K562 (cell line): ENCODE measurements at regions of chr9 and their contacts with region 1.

Region 1: DNA sequence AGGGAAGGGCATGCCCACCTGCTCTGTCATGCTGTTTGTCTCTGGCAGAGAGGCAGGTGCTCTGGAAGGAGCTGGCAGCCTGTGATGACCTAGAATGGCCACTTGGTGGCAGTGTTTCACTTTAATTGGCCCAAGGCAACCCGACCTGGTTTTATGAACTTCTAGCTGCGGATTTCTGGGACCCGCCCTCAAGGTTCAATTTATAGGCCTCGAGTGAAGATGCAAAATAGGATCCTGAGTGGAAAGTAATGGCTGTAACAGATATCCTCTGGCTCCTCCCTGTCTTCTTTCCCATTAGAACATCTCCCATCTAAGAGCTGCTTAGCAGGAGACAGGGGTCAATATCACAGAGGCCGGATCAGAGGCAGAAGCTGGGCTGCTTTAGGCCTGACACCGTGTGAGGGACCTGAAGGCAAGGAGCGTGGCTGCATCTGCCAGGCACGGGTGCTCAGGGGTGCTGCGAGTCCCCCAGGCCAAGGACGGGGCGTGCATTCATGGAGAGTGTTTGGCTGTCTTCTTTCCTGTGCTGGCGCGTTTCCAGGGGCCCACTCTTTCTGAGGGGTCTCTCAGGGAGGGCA is 56.7 kb upstream of the SLC28A3 start:
- DNase-seq: peak; percentile 54 to 66 (median 65)
- ATAC-seq: peak; percentile 91
- H3K4me3 ChIP-seq: no peak overlapping the region
- H3K27ac ChIP-seq: no peak overlapping the region
- H3K4me1 ChIP-seq: no peaks in the 10 kb centered on the region
- H3K27me3 ChIP-seq: no peaks in the 10 kb centered on the region
- CTCF ChIP-seq: peak; percentile 63 to 79 (median 77)
- EP300 ChIP-seq: no peak
- POLR2A ChIP-seq: no peak
- RAD21 ChIP-seq: peak; percentile 77 to 79

Region 2: DNA sequence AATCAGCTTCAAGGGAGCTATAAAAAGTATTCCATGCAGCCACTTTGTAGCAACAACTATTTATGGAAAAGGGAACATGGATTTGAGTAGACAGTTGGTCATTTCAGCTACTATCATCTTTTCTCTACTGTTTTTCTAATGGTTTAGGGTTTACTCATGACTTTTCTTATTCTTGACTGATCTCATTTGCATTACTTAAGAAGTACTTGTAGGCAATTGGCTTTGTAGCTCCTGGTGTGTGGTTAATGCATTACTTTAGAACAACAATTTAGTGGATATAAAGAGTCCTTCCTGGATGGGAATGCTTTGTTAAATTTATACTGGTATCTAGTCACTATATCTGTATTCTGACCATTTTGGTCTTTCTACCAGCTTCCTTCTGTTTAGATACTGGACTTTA is 212.5 kb after region 1 on chr9:
- CTCF ChIA-PET with region 1: no interaction called
- POLR2A ChIA-PET with region 1: no interaction called
- in situ Hi-C with region 1: no loop called
- intact Hi-C with region 1: no loop called
- DNase-seq: no peak
- ATAC-seq: no peak
- H3K4me3 ChIP-seq: no peak overlapping the region
- H3K27ac ChIP-seq: no peak overlapping the region
- H3K4me1 ChIP-seq: no peaks in the 10 kb centered on the region
- H3K27me3 ChIP-seq: no peaks in the 10 kb centered on the region
- CTCF ChIP-seq: no peak
- EP300 ChIP-seq: no peak
- POLR2A ChIP-seq: no peak
- RAD21 ChIP-seq: no peak

Region 3: GRCh38 chr9:85142968-85143367 is 745.7 kb after region 1 on chr9:
- CTCF ChIA-PET with region 1: no interaction called
- POLR2A ChIA-PET with region 1: no interaction called
- in situ Hi-C with region 1: no loop called
- intact Hi-C with region 1: loop called (anchors 2 kb)
- DNase-seq: peak in 3 of 4 experiments; percentile 1 to 5 (median 4)
- ATAC-seq: no peak
- H3K4me3 ChIP-seq: no peak overlapping the region
- H3K27ac ChIP-seq: no peak overlapping the region
- H3K4me1 ChIP-seq: no peaks in the 10 kb centered on the region
- H3K27me3 ChIP-seq: no peaks in the 10 kb centered on the region
- CTCF ChIP-seq: peak in 2 of 3 experiments; percentile 32 to 36; a peak in 2 of 6 replicates
- EP300 ChIP-seq: no peak
- POLR2A ChIP-seq: no peak
- RAD21 ChIP-seq: peak in 1 of 2 experiments; percentile 31; a peak in 1 of 4 replicates

Region 4: DNA sequence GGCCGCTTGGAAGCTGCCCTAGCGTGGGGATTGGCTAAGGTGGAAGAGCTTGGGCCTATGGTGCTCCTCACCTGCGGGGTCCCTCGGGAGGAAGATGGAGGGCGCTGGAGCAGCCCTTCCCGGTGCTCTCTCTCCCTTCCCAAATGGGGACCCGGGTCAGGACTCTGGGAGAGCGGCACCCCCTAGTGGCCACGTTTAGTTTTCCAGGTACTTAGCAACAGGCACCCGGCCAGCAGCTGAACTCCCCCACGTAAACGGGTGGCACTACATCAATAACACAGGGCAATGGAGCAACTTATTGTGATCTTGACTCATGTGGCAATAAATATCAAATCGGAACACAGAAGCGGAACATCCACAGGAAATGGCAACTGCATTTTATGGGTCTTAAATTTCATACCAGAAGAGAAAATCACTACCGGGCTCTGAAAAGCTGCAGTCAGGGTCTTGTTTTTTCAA is 1027.9 kb after region 1 on chr9:
- CTCF ChIA-PET with region 1: no interaction called
- POLR2A ChIA-PET with region 1: no interaction called
- in situ Hi-C with region 1: no loop called
- intact Hi-C with region 1: loop called (anchors 10 kb)
- DNase-seq: peak; percentile 60 to 75 (median 68)
- ATAC-seq: peak; percentile 87
- H3K4me3 ChIP-seq: no peak overlapping the region
- H3K27ac ChIP-seq: no peak overlapping the region
- H3K4me1 ChIP-seq: no peaks in the 10 kb centered on the region
- H3K27me3 ChIP-seq: peaks cover 0 to 5% of the 10 kb centered on the region in 2 experiments; a peak in 2 of 5 replicates
- CTCF ChIP-seq: peak; percentile 59 to 65 (median 61)
- EP300 ChIP-seq: no peak
- POLR2A ChIP-seq: no peak
- RAD21 ChIP-seq: peak; percentile 35 to 53; a peak in 3 of 4 replicates

Region 5: GRCh38 chr9:85610074-85610860 is 1213.0 kb after region 1 on chr9:
- CTCF ChIA-PET with region 1: interaction called, 3 read pairs
- POLR2A ChIA-PET with region 1: no interaction called
- in situ Hi-C with region 1: no loop called
- intact Hi-C with region 1: loop called (anchors 1 kb)
- DNase-seq: peak; percentile 60 to 67 (median 63)
- ATAC-seq: peak; percentile 87
- H3K4me3 ChIP-seq: no peak overlapping the region
- H3K27ac ChIP-seq: no peak overlapping the region
- H3K4me1 ChIP-seq: no peaks in the 10 kb centered on the region
- H3K27me3 ChIP-seq: no peaks in the 10 kb centered on the region
- CTCF ChIP-seq: peak; percentile 47 to 77 (median 58); a peak in 5 of 6 replicates
- EP300 ChIP-seq: no peak
- POLR2A ChIP-seq: no peak
- RAD21 ChIP-seq: peak; percentile 55 to 70